Pancreas (tissue), 10 donors: ENCODE measurements at regions of chr10 and their contacts with region 1.

Region 1: GRCh38 chr10:71383972-71384687 is 12.6 kb upstream of the CDH23 start:
- DNase-seq: peak; percentile 31 to 92 (median 72)
- ATAC-seq: peak; percentile 84 to 99 (median 96)
- H3K4me3 ChIP-seq: no peak overlapping the region
- H3K27ac ChIP-seq: no peak overlapping the region
- H3K4me1 ChIP-seq: no peaks in the 10 kb centered on the region
- H3K27me3 ChIP-seq: no peaks in the 10 kb centered on the region
- CTCF ChIP-seq: peak; percentile 76 to 92 (median 89)

Region 2: GRCh38 chr10:71293446-71294084 is 90.6 kb before region 1 on chr10:
- intact Hi-C with region 1: no loop called
- DNase-seq: peak in 1 of 6 donors; percentile 64
- ATAC-seq: peak in 2 of 4 donors; percentile 8 to 24
- H3K4me3 ChIP-seq: no peak overlapping the region
- H3K27ac ChIP-seq: no peak overlapping the region
- H3K4me1 ChIP-seq: no peaks in the 10 kb centered on the region
- H3K27me3 ChIP-seq: no peaks in the 10 kb centered on the region
- CTCF ChIP-seq: no peak

Region 3: GRCh38 chr10:71462062-71462935 is 78.2 kb after region 1 on chr10:
- intact Hi-C with region 1: no loop called
- DNase-seq: no peak
- ATAC-seq: no peak
- H3K4me3 ChIP-seq: no peak overlapping the region
- H3K27ac ChIP-seq: no peak overlapping the region
- H3K4me1 ChIP-seq: no peaks in the 10 kb centered on the region
- H3K27me3 ChIP-seq: no peaks in the 10 kb centered on the region
- CTCF ChIP-seq: no peak

Region 4: DNA sequence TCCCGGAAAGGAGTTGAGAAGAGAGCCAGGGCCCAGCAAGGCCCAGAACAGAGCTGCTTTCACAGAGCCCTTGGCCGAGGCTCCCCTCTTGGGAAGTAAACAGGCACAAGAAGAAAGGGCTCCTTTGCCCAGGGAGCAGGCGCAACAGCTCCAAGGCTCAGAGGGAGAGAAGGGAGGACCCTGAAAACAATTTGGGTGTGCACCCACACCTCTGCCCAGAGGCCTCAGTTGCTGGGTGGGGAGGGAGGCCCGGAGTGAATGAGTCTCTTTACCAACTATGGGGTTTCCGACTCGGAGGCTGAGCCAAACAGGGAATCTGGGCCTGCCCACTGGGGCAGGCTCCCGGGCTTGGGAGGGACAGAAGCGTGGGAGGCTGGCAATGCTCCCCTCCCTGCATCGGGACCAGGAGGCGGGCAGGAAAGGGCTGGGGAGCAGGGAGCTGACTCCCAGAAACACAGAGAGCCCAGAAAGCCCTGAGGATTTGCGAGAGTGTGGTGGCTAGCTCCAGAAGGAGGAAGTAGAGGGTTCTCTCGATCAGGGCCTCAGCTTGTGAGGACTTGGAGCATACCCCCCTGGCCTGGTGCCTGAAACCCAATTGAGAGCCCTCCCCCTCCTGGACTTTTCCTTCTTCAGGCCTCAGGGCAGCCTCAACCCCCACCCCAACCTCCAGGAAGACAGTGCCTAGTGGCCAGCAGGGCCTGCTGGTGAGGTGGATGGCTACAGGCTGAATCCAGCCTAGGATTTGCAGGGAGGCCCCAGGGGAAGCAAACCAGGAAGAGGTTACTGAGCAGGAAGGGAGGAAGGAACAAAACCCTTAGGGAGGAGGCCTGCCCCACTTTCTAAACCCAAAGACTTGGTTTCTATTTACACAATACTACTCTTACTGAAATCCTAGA is 329.3 kb after region 1 on chr10:
- intact Hi-C with region 1: loop called in 1 of 3 experiments (anchors 10 kb)
- DNase-seq: peak in 4 of 6 donors; percentile 41 to 50 (median 46)
- ATAC-seq: peak; percentile 62 to 79 (median 72)
- H3K4me3 ChIP-seq: no peak overlapping the region
- H3K27ac ChIP-seq: peak overlapping the region; percentile 35 to 74 (median 68)
- H3K4me1 ChIP-seq: peaks cover 0 to 11% (median 9%) of the 10 kb centered on the region in 3 donors
- H3K27me3 ChIP-seq: no peaks in the 10 kb centered on the region
- CTCF ChIP-seq: no peak

Region 5: DNA sequence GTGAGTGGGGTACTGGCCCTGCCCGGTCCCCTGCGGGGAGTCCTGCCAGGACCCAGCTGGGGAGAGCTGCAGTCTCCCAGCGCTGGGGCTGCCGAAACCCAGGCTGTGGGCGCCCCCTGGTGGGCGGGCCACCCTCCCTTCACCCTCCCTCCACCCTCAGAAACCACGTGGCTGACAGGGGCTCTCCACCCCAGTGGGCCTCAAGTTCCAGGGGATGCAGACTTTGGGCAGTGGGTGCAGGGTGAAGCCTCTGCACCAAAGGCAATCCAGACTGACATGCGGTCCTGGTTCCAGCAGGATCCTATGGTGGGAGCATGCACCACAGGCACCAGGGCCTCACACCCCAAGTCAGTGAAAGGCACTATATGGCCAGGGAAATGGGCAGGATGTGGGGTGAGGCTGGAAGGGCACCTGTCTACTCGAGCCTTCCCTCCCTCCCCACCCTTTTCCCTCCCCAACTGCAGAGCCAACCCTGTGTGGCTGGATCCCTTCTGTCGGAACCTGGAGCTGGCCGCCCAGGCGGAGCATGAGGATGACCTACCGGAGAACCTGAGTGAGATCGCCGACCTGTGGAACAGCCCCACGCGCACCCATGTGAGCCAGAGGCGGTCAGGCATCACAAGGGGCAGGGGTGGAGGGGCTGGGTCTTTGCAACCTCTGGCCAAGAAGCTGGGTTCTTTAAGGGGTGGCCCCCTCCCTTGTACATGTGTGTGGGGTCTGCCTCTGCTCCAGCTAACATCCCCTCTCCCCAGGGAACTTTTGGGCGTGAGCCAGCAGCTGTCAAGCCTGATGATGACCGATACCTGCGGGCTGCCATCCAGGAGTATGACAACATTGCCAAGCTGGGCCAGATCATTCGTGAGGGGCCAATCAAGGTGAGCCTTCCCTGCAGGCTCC is 428.1 kb after region 1 on chr10:
- intact Hi-C with region 1: loop called in 1 of 3 experiments (anchors 10 kb)
- DNase-seq: peak; percentile 49 to 91 (median 73)
- ATAC-seq: peak; percentile 74 to 90 (median 86)
- H3K4me3 ChIP-seq: no peak overlapping the region
- H3K27ac ChIP-seq: no peak overlapping the region
- H3K4me1 ChIP-seq: no peaks in the 10 kb centered on the region
- H3K27me3 ChIP-seq: no peaks in the 10 kb centered on the region
- CTCF ChIP-seq: peak; percentile 62 to 77 (median 72)